ENCODE measurements at regions of chr3 and their contacts with region 1.

Region 1: DNA sequence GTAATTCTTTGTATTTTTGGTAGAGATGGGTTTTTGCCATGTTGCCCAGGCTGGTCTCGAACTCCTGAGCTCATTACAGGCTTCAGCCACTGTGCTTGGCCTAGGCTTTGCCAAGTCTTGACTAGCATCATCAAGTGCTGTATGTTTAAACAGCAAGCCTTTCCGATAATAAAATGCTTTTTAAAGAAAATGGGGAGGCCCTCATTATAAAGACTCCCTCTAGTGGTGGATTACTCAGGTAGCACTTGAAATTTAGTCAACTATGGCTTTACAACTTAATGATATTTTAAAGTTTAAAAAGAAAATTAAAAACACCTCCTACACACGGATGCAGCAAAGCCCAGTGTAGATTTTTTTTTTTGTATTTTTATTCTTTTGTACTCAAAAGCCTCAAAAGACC is 213.6 kb downstream of the GAP43 start:
- DNase-seq: no peak
- H3K4me3 ChIP-seq: no peak overlapping the region
- H3K27ac ChIP-seq: no peak overlapping the region
- H3K4me1 ChIP-seq: peaks cover 0 to 6% (median 2%) of the 10 kb centered on the region in 4 experiments; a peak in 3 of 7 replicates
- H3K27me3 ChIP-seq: no peaks in the 10 kb centered on the region
- CTCF ChIP-seq: peak in 2 of 3 experiments; percentile 23 to 40; a peak in 2 of 4 replicates
- EP300 ChIP-seq: no peak
- POLR2A ChIP-seq: no peak
- RAD21 ChIP-seq: peak in 1 of 2 experiments; percentile 20; a peak in 1 of 4 replicates

Region 2: DNA sequence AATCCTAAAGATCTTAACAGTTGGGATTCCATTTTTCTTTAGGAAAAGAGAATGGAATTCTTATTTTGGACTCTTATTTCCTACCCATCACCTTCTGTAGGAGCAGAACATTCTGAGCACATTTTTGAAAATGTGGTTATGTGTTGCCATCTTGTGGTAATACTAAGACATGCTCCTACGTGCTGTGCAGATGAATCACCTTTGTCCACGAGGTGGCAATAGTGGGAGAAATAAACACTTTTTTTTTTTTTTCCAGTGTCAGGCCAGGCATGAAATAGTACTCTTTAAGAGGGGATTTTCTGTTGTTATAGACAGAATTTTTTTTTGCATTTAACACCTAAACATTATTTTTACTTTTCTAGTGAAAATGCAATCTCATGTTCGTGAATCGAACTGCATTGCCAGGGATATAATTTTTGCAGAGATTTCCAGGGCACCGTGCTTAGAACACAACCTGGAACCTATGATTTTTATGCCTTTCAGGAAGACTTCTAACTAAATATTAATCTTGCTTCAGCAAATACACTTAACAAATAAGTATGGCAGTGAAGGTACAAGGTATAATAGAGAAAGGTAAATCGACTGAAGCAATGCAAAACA is 17.1 kb before region 1 on chr3:
- CTCF ChIA-PET with region 1: interaction called, 21 read pairs
- POLR2A ChIA-PET with region 1: no interaction called
- DNase-seq: peak in 1 of 2 experiments; percentile 10
- H3K4me3 ChIP-seq: no peak overlapping the region
- H3K27ac ChIP-seq: no peak overlapping the region
- H3K4me1 ChIP-seq: no peaks in the 10 kb centered on the region
- H3K27me3 ChIP-seq: no peaks in the 10 kb centered on the region
- CTCF ChIP-seq: peak in 2 of 3 experiments; percentile 98 to 100; a peak in 3 of 4 replicates
- EP300 ChIP-seq: no peak
- POLR2A ChIP-seq: no peak
- RAD21 ChIP-seq: peak; percentile 91 to 93

Region 3: DNA sequence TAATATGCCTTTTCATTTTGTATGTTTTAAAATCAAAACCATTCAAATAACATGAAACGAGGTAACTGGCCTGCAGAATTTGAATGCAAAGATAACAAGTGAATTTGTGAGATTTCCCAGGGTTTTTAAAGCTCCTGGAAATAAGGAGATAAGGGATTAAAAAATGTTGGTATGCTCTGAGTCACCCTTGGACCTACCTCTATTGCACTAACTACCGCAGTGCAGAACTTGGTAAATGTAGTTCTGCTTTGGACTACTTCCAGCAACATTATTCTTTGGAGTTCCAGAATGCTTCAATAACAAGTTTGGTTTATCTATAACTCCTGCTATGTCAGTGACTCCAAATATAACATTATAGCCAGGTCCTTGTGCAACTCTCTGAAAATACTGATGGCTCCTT is 11.9 kb before region 1 on chr3:
- CTCF ChIA-PET with region 1: interaction called, 21 read pairs
- POLR2A ChIA-PET with region 1: no interaction called
- DNase-seq: no peak
- H3K4me3 ChIP-seq: no peak overlapping the region
- H3K27ac ChIP-seq: no peak overlapping the region
- H3K4me1 ChIP-seq: no peaks in the 10 kb centered on the region
- H3K27me3 ChIP-seq: no peaks in the 10 kb centered on the region
- CTCF ChIP-seq: no peak
- EP300 ChIP-seq: no peak
- POLR2A ChIP-seq: no peak
- RAD21 ChIP-seq: no peak

Region 4: DNA sequence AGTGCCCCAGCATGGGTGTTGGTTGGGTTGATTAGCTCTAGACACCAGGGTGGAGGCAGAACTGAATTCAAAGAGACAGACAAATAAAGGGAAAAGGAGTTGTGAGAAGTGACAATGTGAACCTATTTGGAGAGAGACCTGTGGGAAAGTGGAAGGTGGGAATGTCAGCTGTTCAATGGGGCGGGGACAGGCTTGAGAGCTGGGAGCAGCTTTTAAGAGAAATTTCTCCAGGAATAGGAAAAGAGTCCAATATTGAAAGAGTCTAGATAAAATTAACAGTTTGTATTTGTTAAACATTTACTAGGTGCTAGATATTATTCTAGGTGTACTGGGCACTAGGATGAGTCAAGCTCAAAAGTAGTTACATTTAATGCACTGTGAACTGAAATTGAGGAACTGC is 11.7 kb after region 1 on chr3:
- CTCF ChIA-PET with region 1: interaction called, 15 read pairs
- POLR2A ChIA-PET with region 1: no interaction called
- DNase-seq: no peak
- H3K4me3 ChIP-seq: no peak overlapping the region
- H3K27ac ChIP-seq: no peak overlapping the region
- H3K4me1 ChIP-seq: peaks cover 0 to 6% (median 0%) of the 10 kb centered on the region in 4 experiments; a peak in 1 of 7 replicates
- H3K27me3 ChIP-seq: no peaks in the 10 kb centered on the region
- CTCF ChIP-seq: no peak
- EP300 ChIP-seq: no peak
- POLR2A ChIP-seq: no peak
- RAD21 ChIP-seq: no peak

Region 5: DNA sequence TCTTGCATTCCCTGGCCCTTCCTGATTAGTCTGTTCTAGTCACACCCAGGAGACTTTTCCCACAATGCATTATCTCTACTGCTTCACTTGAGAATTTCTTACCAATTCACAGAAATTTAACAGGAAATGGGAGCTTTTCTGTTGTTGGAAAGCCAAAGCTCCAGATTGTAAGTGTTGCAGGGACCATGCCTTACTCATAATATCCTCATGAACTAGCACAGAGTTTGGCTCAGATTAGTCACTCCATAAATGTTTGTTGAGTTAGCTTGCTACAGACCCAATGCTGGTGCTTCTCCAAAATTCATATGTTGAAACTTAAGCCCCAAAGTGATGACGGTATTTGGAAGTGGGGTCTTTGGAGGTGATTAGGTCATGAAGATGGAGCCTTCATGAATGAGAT is 19.0 kb after region 1 on chr3:
- CTCF ChIA-PET with region 1: interaction called, 48 read pairs
- POLR2A ChIA-PET with region 1: no interaction called
- DNase-seq: no peak
- H3K4me3 ChIP-seq: no peak overlapping the region
- H3K27ac ChIP-seq: no peak overlapping the region
- H3K4me1 ChIP-seq: peaks cover 0 to 22% (median 13%) of the 10 kb centered on the region in 4 experiments; a peak in 5 of 7 replicates
- H3K27me3 ChIP-seq: no peaks in the 10 kb centered on the region
- CTCF ChIP-seq: no peak
- EP300 ChIP-seq: no peak
- POLR2A ChIP-seq: no peak
- RAD21 ChIP-seq: no peak

Region 6: DNA sequence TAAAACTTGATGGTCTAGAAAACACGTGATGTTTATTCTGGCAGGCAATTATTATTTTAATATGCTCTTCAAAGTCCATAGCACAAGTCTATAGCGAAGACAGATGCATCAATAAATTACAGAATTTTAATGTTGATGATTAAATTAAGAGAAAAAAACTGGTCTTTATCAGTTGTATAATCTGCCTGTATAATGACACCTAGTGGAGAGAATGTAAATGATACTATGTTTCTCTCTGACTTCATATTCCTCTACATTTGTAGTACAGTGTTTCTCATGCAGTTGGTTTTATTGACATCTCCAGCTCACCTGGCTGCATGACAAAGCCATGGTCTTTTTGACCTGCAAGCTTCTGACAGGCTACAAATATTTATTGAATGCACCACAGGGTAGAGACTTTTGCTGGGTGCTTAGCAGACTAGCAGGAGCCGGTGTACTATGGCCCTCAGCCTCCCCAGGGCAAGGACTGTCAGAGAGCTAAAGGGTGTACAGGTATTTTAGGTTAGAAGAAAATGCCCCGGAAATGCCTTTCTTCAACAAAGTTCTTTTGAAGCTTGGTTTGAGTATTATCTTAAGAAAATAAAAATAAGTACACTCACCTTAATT is 76.2 kb after region 1 on chr3:
- CTCF ChIA-PET with region 1: interaction called, 16 read pairs
- POLR2A ChIA-PET with region 1: no interaction called
- DNase-seq: no peak
- H3K4me3 ChIP-seq: no peak overlapping the region
- H3K27ac ChIP-seq: no peak overlapping the region
- H3K4me1 ChIP-seq: peaks cover 0 to 6% (median 2%) of the 10 kb centered on the region in 4 experiments; a peak in 4 of 7 replicates
- H3K27me3 ChIP-seq: no peaks in the 10 kb centered on the region
- CTCF ChIP-seq: peak in 2 of 3 experiments; percentile 7 to 55; a peak in 2 of 4 replicates
- EP300 ChIP-seq: no peak
- POLR2A ChIP-seq: no peak
- RAD21 ChIP-seq: no peak; a peak in 1 of 4 replicates

Region 7: GRCh38 chr3:115922681-115923347 is 85.9 kb after region 1 on chr3:
- CTCF ChIA-PET with region 1: interaction called, 14 read pairs
- POLR2A ChIA-PET with region 1: no interaction called
- DNase-seq: peak; percentile 17 to 64
- H3K4me3 ChIP-seq: no peak overlapping the region
- H3K27ac ChIP-seq: no peak overlapping the region
- H3K4me1 ChIP-seq: peaks cover 0 to 5% (median 0%) of the 10 kb centered on the region in 4 experiments; a peak in 1 of 7 replicates
- H3K27me3 ChIP-seq: no peaks in the 10 kb centered on the region
- CTCF ChIP-seq: peak in 2 of 3 experiments; percentile 70 to 72; a peak in 3 of 4 replicates
- EP300 ChIP-seq: no peak
- POLR2A ChIP-seq: no peak
- RAD21 ChIP-seq: peak; percentile 74 to 83

Measured in H1 (cell line).